Breast epithelium (tissue), 4 donors: ENCODE measurements at regions of chr19 and their contacts with region 1.

Region 1: DNA sequence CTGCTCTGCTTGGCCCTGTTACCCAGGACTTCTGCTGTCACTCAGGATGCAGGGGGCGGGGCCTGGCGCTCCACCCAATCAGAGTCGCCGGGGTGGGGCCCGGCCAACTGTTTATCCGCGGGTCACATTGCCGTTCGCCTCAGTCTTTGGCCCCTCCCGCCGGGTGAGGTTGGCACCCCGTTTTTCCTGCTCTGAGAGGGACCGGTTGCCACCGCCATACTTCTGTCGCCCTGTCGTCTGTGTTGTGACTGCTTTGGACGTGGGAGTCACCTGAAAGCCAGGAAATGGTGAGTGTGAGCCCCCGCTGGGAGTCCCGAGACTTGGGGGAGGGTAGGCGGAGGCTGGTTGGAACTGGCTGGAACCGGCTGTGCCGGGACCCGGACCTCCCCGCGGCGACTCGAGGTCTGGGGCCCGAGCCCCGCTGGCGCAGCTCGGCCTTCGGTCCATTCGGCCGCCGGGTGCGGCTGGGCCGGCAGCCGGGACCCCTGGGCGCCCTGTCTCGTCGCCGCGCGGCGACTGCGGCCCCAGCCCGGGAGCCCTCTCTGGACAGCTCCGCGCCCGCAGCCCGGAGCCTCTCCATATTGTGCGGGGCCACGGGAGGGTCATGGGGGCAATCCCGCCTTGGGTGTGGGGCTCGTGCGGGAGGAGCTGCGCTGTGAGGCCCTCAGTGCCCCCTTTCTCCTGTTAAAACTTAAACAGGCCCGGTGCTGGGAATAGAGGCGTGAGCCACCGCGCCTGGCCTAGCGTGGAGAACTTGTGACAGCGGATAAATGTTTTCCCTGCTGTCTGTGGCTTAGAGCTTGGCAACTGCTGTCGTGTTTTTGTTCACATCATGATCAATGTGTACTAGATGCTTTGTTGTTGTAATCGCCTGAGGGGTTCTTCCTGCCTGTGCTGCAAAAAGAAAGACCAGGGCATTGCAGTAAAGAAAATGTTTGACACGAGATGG is at the start of gene ZNF844:
- DNase-seq: peak; percentile 97 to 99
- H3K4me3 ChIP-seq: peak within 1 kb of the TSS; percentile 85 to 96 (median 93)
- H3K27ac ChIP-seq: peak within 1 kb of the TSS; percentile 98 to 99
- H3K4me1 ChIP-seq: no peaks in the 10 kb centered on the region
- H3K27me3 ChIP-seq: no peaks in the 10 kb centered on the region
- CTCF ChIP-seq: peak in 1 of 3 donors; percentile 11
- POLR2A ChIP-seq: peak; percentile 89
- total RNA-seq, gene ZNF844: 8.8 to 28.5 (median 11.8) TPM

Region 2: DNA sequence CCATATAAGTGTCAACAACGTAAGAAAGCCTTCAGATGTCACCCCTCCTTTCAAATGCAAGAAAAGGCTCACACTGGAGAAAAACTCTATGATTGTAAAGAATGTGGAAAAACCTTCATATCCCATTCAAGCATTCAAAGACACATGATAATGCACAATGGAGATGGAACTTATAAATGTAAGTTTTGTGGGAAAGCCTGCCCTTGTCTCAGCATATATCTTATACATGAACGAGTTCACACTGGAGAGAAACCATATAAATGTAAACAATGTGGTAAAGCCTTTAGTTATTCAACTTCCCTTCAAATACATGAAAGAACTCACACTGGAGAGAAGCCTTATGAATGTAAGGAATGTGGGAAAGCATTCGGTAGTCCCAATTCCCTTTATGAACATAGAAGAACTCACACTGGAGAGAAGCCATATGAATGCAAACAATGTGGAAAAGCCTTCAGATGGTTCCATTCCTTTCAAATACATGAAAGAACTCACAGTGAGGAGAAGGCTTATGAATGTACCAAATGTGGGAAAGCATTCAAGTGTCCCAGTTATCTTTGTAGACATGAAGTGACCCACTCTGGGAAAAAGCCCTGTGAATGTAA is 10.8 kb after region 1 on chr19:
- intact Hi-C with region 1: loop called (anchors 1 kb)
- DNase-seq: no peak
- H3K4me3 ChIP-seq: peak overlapping the region in 1 of 3 donors; percentile 31
- H3K27ac ChIP-seq: no peak overlapping the region
- H3K4me1 ChIP-seq: no peaks in the 10 kb centered on the region
- H3K27me3 ChIP-seq: no peaks in the 10 kb centered on the region
- CTCF ChIP-seq: no peak
- POLR2A ChIP-seq: no peak

Region 3: GRCh38 chr19:13428336-13428735 is 1363.5 kb after region 1 on chr19:
- intact Hi-C with region 1: no loop called
- DNase-seq: no peak
- H3K4me3 ChIP-seq: no peak overlapping the region
- H3K27ac ChIP-seq: no peak overlapping the region
- H3K4me1 ChIP-seq: no peaks in the 10 kb centered on the region
- H3K27me3 ChIP-seq: peaks cover 0 to 5% of the 10 kb centered on the region in 2 donors
- CTCF ChIP-seq: peak in 1 of 3 donors; percentile 17
- POLR2A ChIP-seq: no peak